ENCODE measurements at regions of chr3 and their contacts with region 1.

Region 1: GRCh38 chr3:89617706-89618105 is 510.3 kb downstream of the EPHA3 start:
- H3K4me3 Mint-ChIP-seq: no peak overlapping the region
- H3K27ac Mint-ChIP-seq: no peak overlapping the region
- H3K4me1 Mint-ChIP-seq: no peaks in the 10 kb centered on the region
- H3K27me3 Mint-ChIP-seq: no peaks in the 10 kb centered on the region

Region 2: GRCh38 chr3:89488800-89489580 is 128.7 kb before region 1 on chr3:
- intact Hi-C with region 1: no loop called
- H3K4me3 Mint-ChIP-seq: no peak overlapping the region
- H3K27ac Mint-ChIP-seq: no peak overlapping the region
- H3K4me1 Mint-ChIP-seq: no peaks in the 10 kb centered on the region
- H3K27me3 Mint-ChIP-seq: no peaks in the 10 kb centered on the region

Region 3: DNA sequence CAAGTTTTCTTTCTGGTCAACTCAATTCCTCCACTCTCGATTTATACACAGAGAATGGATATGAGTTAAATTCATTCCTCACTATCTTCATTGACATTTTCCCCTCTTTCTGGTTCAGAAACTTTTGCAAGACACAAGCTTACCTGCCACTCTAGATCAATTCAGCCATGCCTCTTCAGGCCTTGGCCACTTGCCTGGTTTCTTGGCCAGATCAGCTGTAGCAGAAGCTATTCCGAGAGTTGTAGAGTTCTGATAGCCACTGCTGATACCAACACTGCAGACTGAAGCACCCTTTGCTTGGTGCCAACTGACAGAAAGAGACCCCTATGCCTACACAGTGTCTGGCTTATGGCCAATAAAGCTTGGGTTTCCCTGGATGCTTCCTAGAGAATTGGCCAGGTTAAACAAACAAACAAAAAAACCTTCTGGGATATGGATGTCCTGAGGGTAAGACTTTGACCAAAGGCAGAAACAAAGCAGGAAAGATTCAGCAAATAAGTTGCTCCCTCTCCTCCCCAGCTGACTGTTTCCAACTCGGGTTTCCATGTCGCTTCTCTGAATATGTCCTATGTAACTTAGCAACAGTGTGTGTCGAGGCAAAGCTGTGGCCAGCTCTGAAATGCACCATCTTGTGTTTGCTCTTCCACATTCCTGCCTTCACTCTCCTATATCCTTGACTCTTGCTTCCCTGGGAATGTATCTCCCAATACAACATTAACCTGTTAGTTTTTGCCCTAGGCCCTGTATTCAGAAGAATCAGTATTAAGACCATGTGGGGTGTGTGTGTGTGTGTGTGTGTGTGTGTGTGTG is 11.4 kb after region 1 on chr3:
- intact Hi-C with region 1: loop called (anchors 1 kb)
- H3K4me3 Mint-ChIP-seq: no peak overlapping the region
- H3K27ac Mint-ChIP-seq: no peak overlapping the region
- H3K4me1 Mint-ChIP-seq: no peaks in the 10 kb centered on the region
- H3K27me3 Mint-ChIP-seq: no peaks in the 10 kb centered on the region

Measured in dendritic cell treated with granulocyte-macrophage colony-stimulating factor and Interleukin-4, amounts not matched to agents 40 ng/mL and 50 ng/mL, for 4 days (primary cell).